Sciatic nerve (tissue), 2 donors: ENCODE measurements at regions of chr1 and their contacts with region 1.

Region 1: DNA sequence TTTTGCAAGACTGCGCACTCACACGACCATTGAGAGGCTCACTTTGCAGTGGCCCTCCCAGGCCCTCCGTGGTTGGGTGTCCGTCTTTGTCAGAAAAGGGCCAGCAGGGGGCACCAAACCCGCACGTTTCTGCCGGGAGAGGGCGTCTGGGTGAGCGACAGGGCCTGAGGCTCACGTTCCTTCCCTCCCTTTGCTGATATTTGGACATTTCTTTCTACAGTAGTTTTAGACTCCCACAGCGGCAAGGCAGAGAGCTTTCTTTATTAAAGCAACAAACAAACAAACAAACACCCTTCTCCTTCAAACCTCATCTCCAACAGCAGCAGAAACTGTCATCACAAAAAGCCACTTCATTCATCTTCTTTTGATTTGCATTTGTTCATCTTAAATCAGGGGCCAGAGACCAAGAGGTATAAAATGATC is 79.2 kb upstream of the WDR26 start:
- DNase-seq: peak; percentile 95
- ATAC-seq: peak; percentile 96

Region 2: DNA sequence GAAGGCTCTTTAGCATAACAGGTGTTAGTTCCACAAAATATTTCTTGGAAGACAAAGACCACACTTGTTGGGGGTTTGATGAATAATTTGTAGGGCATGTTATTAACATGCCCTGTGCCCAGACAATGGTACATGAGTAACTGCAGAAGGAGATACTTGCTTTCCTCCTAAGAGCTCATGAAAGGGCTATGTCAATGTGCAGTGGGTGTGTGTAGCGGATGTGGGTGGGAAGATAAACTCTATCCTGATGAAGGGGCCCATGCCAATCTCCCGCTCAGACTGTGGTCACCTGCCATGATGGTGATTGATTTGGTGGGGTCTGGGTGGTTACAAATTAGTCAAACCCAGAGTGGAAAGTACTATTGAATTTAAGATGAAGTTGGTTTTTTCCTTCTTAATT is 345.9 kb after region 1 on chr1:
- intact Hi-C with region 1: loop called (anchors 5 kb)
- DNase-seq: no peak
- ATAC-seq: no peak

Region 3: DNA sequence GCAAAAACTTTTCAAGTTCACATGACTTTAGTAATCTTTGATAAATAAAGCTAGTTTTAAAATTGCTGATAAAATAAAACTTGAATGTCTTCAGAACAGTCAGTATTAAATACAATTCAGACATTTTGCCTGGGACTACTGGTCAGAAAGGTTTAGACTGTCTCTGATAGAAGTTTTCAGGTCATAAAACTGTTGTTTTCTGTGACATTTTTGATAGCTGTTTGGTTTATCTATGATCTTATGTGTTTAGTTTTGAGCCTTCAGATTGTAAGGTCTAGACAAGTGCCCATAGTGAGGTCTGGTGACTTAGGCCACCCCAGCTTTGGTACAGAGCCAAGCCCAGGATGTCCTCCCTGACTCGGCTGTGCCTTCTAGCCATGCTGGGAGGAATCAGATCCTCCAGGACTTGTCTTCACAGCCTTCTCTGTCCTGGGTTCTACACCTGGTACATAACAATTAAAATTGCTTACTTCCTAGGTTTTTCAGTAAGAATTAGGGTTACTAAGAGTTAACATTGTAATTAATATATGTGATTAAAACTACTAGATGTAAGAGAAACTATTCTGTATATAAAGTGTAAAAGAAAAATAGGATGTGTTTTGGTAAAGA is 400.6 kb after region 1 on chr1:
- intact Hi-C with region 1: loop called (anchors 10 kb)
- DNase-seq: no peak
- ATAC-seq: no peak